Heart right ventricle (tissue), 16 donors: ENCODE measurements at regions of chr1 and their contacts with region 1.

Region 1: GRCh38 chr1:177645491-177646190 is 324.2 kb downstream of the SEC16B start:
- DNase-seq: no peak
- ATAC-seq: no peak
- H3K4me3 ChIP-seq: no peak overlapping the region
- H3K27ac ChIP-seq: no peak overlapping the region
- H3K4me1 ChIP-seq: no peaks in the 10 kb centered on the region
- H3K27me3 ChIP-seq: no peaks in the 10 kb centered on the region
- CTCF ChIP-seq: no peak

Region 2: GRCh38 chr1:177703888-177704446 is 58.3 kb after region 1 on chr1:
- intact Hi-C with region 1: loop called in 1 of 10 experiments (anchors 10 kb)
- DNase-seq: no peak
- ATAC-seq: no peak
- H3K4me3 ChIP-seq: no peak overlapping the region
- H3K27ac ChIP-seq: no peak overlapping the region
- H3K4me1 ChIP-seq: no peaks in the 10 kb centered on the region
- H3K27me3 ChIP-seq: peaks cover 0 to 18% (median 0%) of the 10 kb centered on the region in 7 donors
- CTCF ChIP-seq: no peak